Heart left ventricle (tissue), 16 donors: ENCODE measurements at regions of chr16 and their contacts with region 1.

Region 1: DNA sequence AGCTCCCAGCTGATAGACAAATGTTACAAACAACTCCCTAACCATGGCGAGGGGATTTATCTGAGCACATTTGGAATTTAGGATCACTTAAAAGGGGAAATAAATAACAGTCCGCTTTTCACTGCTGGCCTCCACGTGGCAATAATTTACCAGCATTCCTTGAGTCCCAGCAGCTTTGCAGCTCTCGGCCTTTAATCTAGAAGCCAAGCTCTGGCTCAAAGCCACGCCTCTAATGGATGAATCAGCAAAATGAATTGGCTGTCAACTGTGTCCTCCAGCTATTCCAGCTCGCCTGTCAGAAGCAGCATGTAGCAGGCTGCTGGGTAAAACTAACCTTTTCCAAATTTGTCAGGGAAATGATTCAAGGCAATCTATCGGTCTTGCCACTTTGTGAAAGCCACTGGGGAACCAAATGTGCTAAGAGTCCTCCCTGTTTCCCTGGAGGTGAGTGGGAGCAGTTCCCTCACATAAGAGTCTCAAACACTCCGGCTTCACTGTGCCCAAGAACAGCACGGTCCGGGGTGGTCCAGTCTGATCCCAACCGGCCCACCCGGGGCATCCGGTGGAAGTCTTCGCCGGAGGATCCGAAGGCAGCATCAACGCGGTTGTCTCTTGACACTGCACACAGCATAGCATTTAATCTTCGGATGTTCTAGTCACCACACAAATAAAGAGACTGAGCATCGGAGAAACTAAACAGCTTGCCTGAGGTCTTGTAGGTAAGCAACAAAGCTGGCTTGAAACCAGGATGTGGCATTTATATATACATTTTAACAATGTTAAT is 143.3 kb downstream of the PARN start:
- DNase-seq: peak in 4 of 5 donors; percentile 79 to 91 (median 86)
- ATAC-seq: peak; percentile 66 to 86 (median 86)
- H3K4me3 ChIP-seq: peak overlapping the region in 11 of 12 donors; percentile 4 to 55 (median 49)
- H3K27ac ChIP-seq: peak overlapping the region; percentile 43 to 84 (median 80)
- H3K4me1 ChIP-seq: peaks cover 0 to 54% (median 25%) of the 10 kb centered on the region in 12 donors
- H3K27me3 ChIP-seq: no peaks in the 10 kb centered on the region
- CTCF ChIP-seq: peak in 1 of 12 donors; percentile 12
- POLR2A ChIP-seq: peak in 1 of 2 donors; percentile 28

Region 2: GRCh38 chr16:14310519-14310991 is 176.2 kb before region 1 on chr16:
- intact Hi-C with region 1: loop called in 1 of 10 experiments (anchors 5 kb)
- DNase-seq: peak in 1 of 5 donors; percentile 47
- ATAC-seq: no peak
- H3K4me3 ChIP-seq: no peak overlapping the region
- H3K27ac ChIP-seq: peak overlapping the region in 7 of 12 donors; percentile 5 to 75 (median 36)
- H3K4me1 ChIP-seq: peaks cover 0 to 59% (median 26%) of the 10 kb centered on the region in 12 donors
- H3K27me3 ChIP-seq: no peaks in the 10 kb centered on the region
- CTCF ChIP-seq: no peak
- POLR2A ChIP-seq: no peak

Region 3: DNA sequence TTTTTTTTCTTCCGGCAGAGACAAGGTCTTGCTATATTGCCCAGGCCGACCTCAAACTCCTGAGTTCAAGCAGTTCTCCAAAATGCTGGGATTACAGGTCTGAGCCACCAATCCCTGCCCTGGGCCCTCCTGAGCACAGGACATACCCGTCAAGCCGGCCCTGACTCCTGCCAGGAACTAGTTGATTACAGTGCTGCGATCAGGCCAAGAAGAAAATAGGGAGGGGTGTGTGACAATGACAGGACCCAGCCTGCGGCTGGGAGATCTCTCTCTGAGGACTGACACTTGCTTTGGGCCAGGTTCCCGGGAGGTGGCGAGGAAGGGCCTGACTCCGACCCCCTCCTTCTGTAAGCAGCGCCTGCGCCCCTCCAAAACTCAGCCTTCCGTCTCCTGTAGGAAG is 139.0 kb before region 1 on chr16:
- intact Hi-C with region 1: loop called in 1 of 10 experiments (anchors 5 kb)
- DNase-seq: peak; percentile 66 to 87 (median 73)
- ATAC-seq: peak; percentile 96 to 98 (median 96)
- H3K4me3 ChIP-seq: no peak overlapping the region
- H3K27ac ChIP-seq: peak overlapping the region; percentile 4 to 77 (median 62)
- H3K4me1 ChIP-seq: peaks cover 0 to 10% (median 0%) of the 10 kb centered on the region in 12 donors
- H3K27me3 ChIP-seq: no peaks in the 10 kb centered on the region
- CTCF ChIP-seq: no peak
- POLR2A ChIP-seq: no peak

Region 4: GRCh38 chr16:14418795-14419225 is 67.9 kb before region 1 on chr16:
- intact Hi-C with region 1: loop called in 1 of 10 experiments (anchors 5 kb)
- DNase-seq: peak in 3 of 5 donors; percentile 23 to 64 (median 43)
- ATAC-seq: peak; percentile 87 to 90 (median 88)
- H3K4me3 ChIP-seq: peak overlapping the region in 3 of 12 donors; percentile 16 to 22 (median 20)
- H3K27ac ChIP-seq: peak overlapping the region; percentile 58 to 85 (median 69)
- H3K4me1 ChIP-seq: peaks cover 0 to 26% (median 9%) of the 10 kb centered on the region in 12 donors
- H3K27me3 ChIP-seq: no peaks in the 10 kb centered on the region
- CTCF ChIP-seq: no peak
- POLR2A ChIP-seq: no peak

Region 5: DNA sequence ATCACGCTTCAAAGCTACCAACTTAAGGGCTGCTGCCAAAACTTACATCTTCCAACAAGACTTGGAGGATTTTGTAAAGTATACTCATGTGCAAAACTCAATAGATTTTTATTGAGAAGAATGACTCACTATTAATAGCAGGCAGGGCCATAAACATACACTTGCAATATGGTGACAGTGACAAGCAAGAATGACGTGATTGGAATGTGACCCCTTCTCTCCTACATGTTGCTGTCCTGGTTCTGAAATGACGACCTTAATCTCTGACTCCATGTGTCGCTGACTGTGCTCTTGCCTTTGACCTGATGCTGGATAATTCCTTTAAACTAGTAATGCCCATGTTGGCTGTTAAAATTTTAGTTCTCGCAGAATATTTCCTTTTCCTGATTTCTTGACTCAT is 31.1 kb before region 1 on chr16:
- intact Hi-C with region 1: no loop called
- DNase-seq: no peak
- ATAC-seq: peak in 2 of 4 donors; percentile 43 to 66
- H3K4me3 ChIP-seq: no peak overlapping the region
- H3K27ac ChIP-seq: no peak overlapping the region
- H3K4me1 ChIP-seq: peaks cover 0 to 7% (median under 1%) of the 10 kb centered on the region in 12 donors
- H3K27me3 ChIP-seq: no peaks in the 10 kb centered on the region
- CTCF ChIP-seq: no peak
- POLR2A ChIP-seq: no peak

Region 6: DNA sequence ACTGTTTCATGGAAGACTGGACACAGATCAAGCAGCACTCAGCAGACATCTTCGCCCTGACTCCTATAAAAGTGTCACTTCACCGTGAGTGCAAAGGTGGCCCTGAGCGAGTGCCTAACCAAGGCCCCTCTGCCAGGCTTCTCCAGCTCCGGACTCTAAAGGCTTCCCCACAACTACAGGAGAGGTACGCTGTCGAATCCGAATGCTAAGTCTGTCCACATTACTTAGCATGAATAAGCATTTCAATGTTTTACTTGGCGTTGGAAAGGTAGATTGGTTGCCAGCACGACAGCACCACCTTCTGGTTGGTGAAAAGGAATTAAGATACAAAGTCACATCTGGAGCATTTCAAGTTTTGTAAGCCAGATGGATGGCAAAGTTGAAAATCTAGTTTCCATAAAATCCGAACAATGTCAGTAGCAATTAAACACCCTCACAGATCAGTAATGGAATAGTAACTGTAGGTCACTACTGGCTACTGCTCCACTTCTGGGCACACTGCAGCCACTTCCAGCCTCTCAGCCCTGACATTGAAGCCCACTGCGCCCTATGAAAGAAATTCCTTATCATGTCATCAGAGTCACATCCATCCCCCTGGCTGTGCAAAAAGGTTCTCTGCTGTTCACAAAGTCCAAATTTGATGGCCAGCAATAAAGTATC is 42.4 kb after region 1 on chr16:
- intact Hi-C with region 1: loop called in 1 of 10 experiments (anchors 5 kb)
- DNase-seq: peak in 4 of 5 donors; percentile 64 to 77 (median 76)
- ATAC-seq: peak; percentile 72 to 91 (median 88)
- H3K4me3 ChIP-seq: peak overlapping the region in 6 of 12 donors; percentile 2 to 42 (median 34)
- H3K27ac ChIP-seq: peak overlapping the region in 6 of 12 donors; percentile 2 to 54 (median 40)
- H3K4me1 ChIP-seq: peaks cover 0 to 26% (median 7%) of the 10 kb centered on the region in 12 donors
- H3K27me3 ChIP-seq: no peaks in the 10 kb centered on the region
- CTCF ChIP-seq: peak; percentile 51 to 80 (median 74)
- POLR2A ChIP-seq: no peak